Activated CD4-positive, alpha-beta T cell treated with anti-CD3 and anti-CD28 coated beads for 36 hours (primary cell): ENCODE measurements at regions of chr10 and their contacts with region 1.

Region 1: GRCh38 chr10:81018708-81019365 is 481.1 kb downstream of the SH2D4B start:
- DNase-seq: peak; percentile 26
- ATAC-seq: peak; percentile 70
- H3K4me3 Mint-ChIP-seq: no peak overlapping the region
- H3K27ac Mint-ChIP-seq: no peak overlapping the region
- H3K4me1 Mint-ChIP-seq: no peaks in the 10 kb centered on the region
- H3K27me3 Mint-ChIP-seq: peaks cover 8% of the 10 kb centered on the region

Region 2: GRCh38 chr10:80684259-80684658 is 334.6 kb before region 1 on chr10:
- CTCF ChIA-PET with region 1: no interaction called
- POLR2A ChIA-PET with region 1: no interaction called
- intact Hi-C with region 1: loop called in 1 of 2 experiments (anchors 5 kb)
- DNase-seq: no peak
- ATAC-seq: peak; percentile 44
- H3K4me3 Mint-ChIP-seq: no peak overlapping the region
- H3K27ac Mint-ChIP-seq: no peak overlapping the region
- H3K4me1 Mint-ChIP-seq: peaks cover 2% of the 10 kb centered on the region
- H3K27me3 Mint-ChIP-seq: no peaks in the 10 kb centered on the region